ENCODE measurements at regions of chr1 and their contacts with region 1.

Region 1: GRCh38 chr1:3796215-3797061 is at the start of gene LRRC47:
- DNase-seq: peak; percentile 95
- H3K4me3 Mint-ChIP-seq: peak within 1 kb of the TSS; percentile 86
- H3K27ac Mint-ChIP-seq: peak within 1 kb of the TSS; percentile 77
- H3K4me1 Mint-ChIP-seq: peaks cover 46% of the 10 kb centered on the region
- H3K27me3 Mint-ChIP-seq: peaks cover 2% of the 10 kb centered on the region
- total RNA-seq, gene LRRC47: 32.4 to 33.5 TPM

Region 2: DNA sequence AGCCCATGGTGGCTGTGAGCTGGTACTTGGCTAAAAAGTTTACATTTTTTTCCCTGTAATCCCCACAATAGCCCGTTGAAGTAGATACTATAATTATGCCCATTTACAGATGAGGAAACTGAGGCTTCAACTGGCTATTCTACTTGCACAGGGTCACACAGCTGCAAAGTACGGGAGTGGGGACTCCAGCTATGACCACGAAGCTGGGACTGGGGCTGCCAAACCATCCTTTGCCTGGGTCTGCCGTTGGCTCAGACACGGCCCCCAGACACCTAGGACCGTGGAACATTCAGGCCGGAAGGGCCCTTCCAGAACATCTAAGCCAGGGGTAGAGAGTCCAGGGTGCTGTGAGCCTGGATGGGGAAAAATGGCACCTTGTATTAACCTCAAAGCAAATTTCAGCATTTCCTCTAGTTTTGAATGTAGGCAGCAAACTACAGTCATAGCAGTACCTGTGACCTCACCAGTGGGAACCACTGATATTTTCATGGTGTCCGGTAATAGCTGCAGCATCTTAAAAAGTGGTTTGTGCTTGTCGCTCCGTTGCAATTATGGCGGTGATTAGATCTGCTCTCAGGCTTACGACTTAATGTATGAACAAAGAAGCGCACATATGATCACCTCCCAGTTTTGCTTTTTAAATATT is 139.9 kb before region 1 on chr1:
- CTCF ChIA-PET with region 1: no interaction called
- POLR2A ChIA-PET with region 1: no interaction called
- DNase-seq: peak; percentile 39
- H3K4me3 Mint-ChIP-seq: no peak overlapping the region
- H3K27ac Mint-ChIP-seq: no peak overlapping the region
- H3K4me1 Mint-ChIP-seq: peaks cover 28% of the 10 kb centered on the region
- H3K27me3 Mint-ChIP-seq: peaks cover 55% of the 10 kb centered on the region

Region 3: DNA sequence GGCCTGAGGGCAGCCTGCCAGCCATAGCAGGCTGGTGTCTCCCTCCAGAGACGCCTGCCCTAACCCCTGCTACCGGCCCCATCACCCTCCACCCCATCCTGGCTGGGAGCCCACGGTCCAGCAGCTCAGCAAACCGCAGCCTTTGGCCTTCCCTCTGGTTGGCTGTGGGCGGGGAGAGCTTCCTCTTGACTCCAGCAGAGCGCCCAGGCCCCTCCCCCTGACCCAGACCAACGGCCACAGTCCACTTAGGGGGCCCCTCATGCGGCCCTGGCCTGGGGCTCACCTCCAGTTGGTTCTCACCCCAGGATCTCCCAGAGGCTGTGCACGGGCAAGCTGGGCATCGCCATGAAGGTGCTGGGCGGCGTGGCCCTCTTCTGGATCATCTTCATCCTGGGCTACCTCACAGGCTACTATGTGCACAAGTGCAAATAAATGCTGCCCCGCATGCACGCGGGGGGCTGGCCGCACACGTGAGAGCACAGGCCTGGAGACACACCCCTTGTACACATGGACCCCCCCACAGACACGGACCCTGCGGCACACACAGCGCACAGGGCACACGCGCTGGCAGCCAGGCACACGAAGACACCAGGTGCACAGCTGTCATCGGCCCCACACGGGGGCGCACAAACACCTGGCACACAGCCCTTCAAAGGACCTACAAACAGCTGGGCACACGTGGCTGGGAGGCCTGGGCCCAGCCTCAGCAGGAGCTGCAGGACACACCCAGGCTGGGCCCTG is 20.8 kb before region 1 on chr1:
- CTCF ChIA-PET with region 1: interaction called, 29 read pairs
- POLR2A ChIA-PET with region 1: interaction called, 26 read pairs
- DNase-seq: peak; percentile 57
- H3K4me3 Mint-ChIP-seq: no peak overlapping the region
- H3K27ac Mint-ChIP-seq: no peak overlapping the region
- H3K4me1 Mint-ChIP-seq: peaks cover 3% of the 10 kb centered on the region
- H3K27me3 Mint-ChIP-seq: no peaks in the 10 kb centered on the region

Region 4: GRCh38 chr1:3821004-3821403 is 24.6 kb after region 1 on chr1:
- CTCF ChIA-PET with region 1: no interaction called
- POLR2A ChIA-PET with region 1: no interaction called
- DNase-seq: no peak
- H3K4me3 Mint-ChIP-seq: no peak overlapping the region
- H3K27ac Mint-ChIP-seq: no peak overlapping the region
- H3K4me1 Mint-ChIP-seq: no peaks in the 10 kb centered on the region
- H3K27me3 Mint-ChIP-seq: no peaks in the 10 kb centered on the region

Region 5: GRCh38 chr1:3900119-3900968 is 103.9 kb after region 1 on chr1 and contains the start of gene C1orf174:
- CTCF ChIA-PET with region 1: no interaction called
- POLR2A ChIA-PET with region 1: interaction called, 15 read pairs
- DNase-seq: peak; percentile 93
- H3K4me3 Mint-ChIP-seq: peak within 1 kb of the TSS; percentile 94
- H3K27ac Mint-ChIP-seq: peak within 1 kb of the TSS; percentile 99
- H3K4me1 Mint-ChIP-seq: peaks cover 50% of the 10 kb centered on the region
- H3K27me3 Mint-ChIP-seq: no peaks in the 10 kb centered on the region
- total RNA-seq, gene C1orf174: 24.1 to 25.5 TPM

Region 6: GRCh38 chr1:4375812-4376211 is 579.4 kb after region 1 on chr1:
- CTCF ChIA-PET with region 1: no interaction called
- POLR2A ChIA-PET with region 1: no interaction called
- DNase-seq: no peak
- H3K4me3 Mint-ChIP-seq: no peak overlapping the region
- H3K27ac Mint-ChIP-seq: no peak overlapping the region
- H3K4me1 Mint-ChIP-seq: peaks cover 12% of the 10 kb centered on the region
- H3K27me3 Mint-ChIP-seq: no peaks in the 10 kb centered on the region